ENCODE measurements at regions of chr1 and their contacts with region 1.

Region 1: DNA sequence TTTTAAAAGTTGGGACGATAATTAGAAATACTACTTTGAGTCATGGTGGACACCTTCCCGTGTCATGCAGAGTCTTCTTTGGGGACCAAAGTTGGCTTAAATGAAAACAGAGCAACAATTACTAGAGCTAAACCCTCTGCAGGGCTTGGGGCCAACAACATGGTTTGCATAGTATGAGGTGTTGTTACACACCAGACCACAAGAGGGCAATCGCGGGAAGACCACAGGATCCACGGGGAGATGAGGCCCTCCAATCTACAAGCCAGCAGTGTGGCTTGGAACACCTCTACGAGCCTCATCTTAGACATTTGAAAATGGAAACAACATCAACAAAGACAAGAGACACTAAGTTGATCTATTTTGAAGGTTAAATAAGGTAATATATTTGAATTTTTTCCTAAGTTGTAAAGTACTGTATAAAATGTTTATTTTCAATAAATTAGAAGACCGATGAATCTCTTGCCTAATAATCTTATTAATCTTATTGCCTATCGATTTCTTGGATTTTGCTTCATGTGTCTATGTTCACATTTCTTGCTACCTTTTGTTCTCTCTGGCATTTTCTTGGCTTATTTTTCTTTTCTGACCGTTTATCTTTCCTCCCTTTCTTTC is 8.2 kb upstream of the SMCP start:
- DNase-seq: peak; percentile 60
- ATAC-seq: peak; percentile 83
- H3K4me3 ChIP-seq: no peak overlapping the region
- H3K27ac ChIP-seq: no peak overlapping the region
- H3K4me1 ChIP-seq: no peaks in the 10 kb centered on the region
- H3K27me3 ChIP-seq: no peaks in the 10 kb centered on the region
- CTCF ChIP-seq: peak; percentile 79
- EP300 ChIP-seq: no peak
- POLR2A ChIP-seq: no peak
- RAD21 ChIP-seq: peak; percentile 13; the same call in 1 of the 2 replicates

Region 2: DNA sequence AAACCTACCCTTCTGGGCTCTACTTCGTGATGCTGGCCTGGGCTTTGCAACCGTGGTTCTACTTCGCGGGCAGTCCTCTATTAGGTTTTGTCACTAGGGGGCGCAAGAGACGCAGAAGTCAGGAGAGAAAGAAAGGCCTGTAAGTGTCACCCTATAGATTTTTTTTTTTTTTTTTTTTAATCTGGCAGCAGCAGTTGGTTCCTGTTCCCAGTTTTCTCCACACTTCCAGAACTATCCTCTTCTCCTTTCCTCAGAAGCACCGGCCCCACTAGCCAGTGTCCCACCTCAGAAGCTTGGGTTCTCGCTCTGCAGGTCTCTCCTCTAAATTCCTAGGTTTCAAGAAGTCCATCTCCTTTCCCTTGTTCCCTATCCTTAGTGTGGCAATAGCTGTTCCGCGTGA is 215.8 kb before region 1 on chr1:
- CTCF ChIA-PET with region 1: interaction called, 3 read pairs
- POLR2A ChIA-PET with region 1: no interaction called
- in situ Hi-C with region 1: no loop called
- intact Hi-C with region 1: loop called (anchors 5 kb)
- DNase-seq: peak; percentile 59
- ATAC-seq: peak; percentile 82
- H3K4me3 ChIP-seq: no peak overlapping the region
- H3K27ac ChIP-seq: no peak overlapping the region
- H3K4me1 ChIP-seq: no peaks in the 10 kb centered on the region
- H3K27me3 ChIP-seq: no peaks in the 10 kb centered on the region
- CTCF ChIP-seq: peak; percentile 72
- EP300 ChIP-seq: no peak
- POLR2A ChIP-seq: no peak
- RAD21 ChIP-seq: peak; percentile 11; the same call in 1 of the 2 replicates

Region 3: DNA sequence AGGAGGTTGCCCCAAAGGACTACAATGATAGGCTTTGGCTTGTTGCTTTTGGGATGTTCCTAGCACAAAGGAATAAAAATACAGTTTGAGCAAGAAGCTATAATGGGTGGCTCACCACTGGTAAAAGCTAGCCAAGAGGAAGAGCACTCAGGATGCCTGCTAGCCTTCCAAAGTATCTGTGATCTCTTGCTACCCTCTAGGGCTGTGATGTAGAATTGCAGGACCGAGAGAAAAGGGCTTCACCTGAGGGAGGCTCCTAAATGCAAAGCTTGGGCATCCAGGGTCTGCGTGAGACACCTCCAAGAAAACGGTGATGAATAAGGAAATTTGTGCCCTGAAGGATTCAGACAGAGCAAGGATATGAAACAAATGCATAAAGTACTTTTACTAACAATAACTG is 56.2 kb after region 1 on chr1:
- CTCF ChIA-PET with region 1: interaction called, 12 read pairs
- POLR2A ChIA-PET with region 1: no interaction called
- in situ Hi-C with region 1: loop called (anchors 5 kb)
- intact Hi-C with region 1: loop called (anchors 1 kb)
- DNase-seq: peak; percentile 18
- ATAC-seq: peak; percentile 75
- H3K4me3 ChIP-seq: no peak overlapping the region
- H3K27ac ChIP-seq: no peak overlapping the region
- H3K4me1 ChIP-seq: peaks cover 6% of the 10 kb centered on the region
- H3K27me3 ChIP-seq: no peaks in the 10 kb centered on the region
- CTCF ChIP-seq: peak; percentile 67
- EP300 ChIP-seq: no peak
- POLR2A ChIP-seq: no peak
- RAD21 ChIP-seq: 0 out of 2 replicates have a peak, but pooled peaks have one; percentile 28

Region 4: GRCh38 chr1:153150846-153151245 is 280.9 kb after region 1 on chr1 and contains the start of gene SPRR2G:
- CTCF ChIA-PET with region 1: no interaction called
- POLR2A ChIA-PET with region 1: no interaction called
- in situ Hi-C with region 1: no loop called
- intact Hi-C with region 1: no loop called
- DNase-seq: no peak
- ATAC-seq: no peak
- H3K4me3 ChIP-seq: no peak within 1 kb of the TSS
- H3K27ac ChIP-seq: no peak within 1 kb of the TSS
- H3K4me1 ChIP-seq: no peaks in the 10 kb centered on the region
- H3K27me3 ChIP-seq: no peaks in the 10 kb centered on the region
- CTCF ChIP-seq: no peak
- EP300 ChIP-seq: no peak
- POLR2A ChIP-seq: no peak
- RAD21 ChIP-seq: no peak
- total RNA-seq, gene SPRR2G: not detected in 2 replicates

Region 5: DNA sequence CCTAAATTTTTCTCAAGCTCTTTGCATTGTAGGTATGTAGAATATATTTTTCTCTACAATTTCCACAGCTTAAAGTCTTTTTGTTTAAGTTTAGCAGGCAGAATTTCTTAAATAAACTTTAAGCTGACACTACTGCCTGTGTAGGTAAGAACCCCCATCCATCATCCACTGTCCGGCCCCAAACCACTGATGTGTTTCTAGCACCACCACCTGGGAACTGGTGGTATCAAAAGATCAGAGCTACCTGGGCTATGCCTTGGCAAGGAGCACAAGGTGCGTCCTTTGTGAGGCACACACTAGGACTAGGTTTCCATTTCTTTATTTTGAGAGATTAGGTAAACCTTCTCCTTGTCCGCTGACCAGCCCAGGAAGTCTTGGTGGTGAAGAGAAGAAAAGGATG is 322.8 kb after region 1 on chr1:
- CTCF ChIA-PET with region 1: interaction called, 4 read pairs
- POLR2A ChIA-PET with region 1: no interaction called
- in situ Hi-C with region 1: loop called (anchors 10 kb)
- intact Hi-C with region 1: no loop called
- DNase-seq: peak; percentile 8
- ATAC-seq: peak; percentile 71
- H3K4me3 ChIP-seq: no peak overlapping the region
- H3K27ac ChIP-seq: no peak overlapping the region
- H3K4me1 ChIP-seq: no peaks in the 10 kb centered on the region
- H3K27me3 ChIP-seq: no peaks in the 10 kb centered on the region
- CTCF ChIP-seq: peak; percentile 58
- EP300 ChIP-seq: no peak
- POLR2A ChIP-seq: no peak
- RAD21 ChIP-seq: no peak

Region 6: GRCh38 chr1:153220606-153221303 is 350.8 kb after region 1 on chr1:
- CTCF ChIA-PET with region 1: interaction called, 7 read pairs
- POLR2A ChIA-PET with region 1: no interaction called
- in situ Hi-C with region 1: loop called (anchors 10 kb)
- intact Hi-C with region 1: no loop called
- DNase-seq: peak; percentile 8
- ATAC-seq: no peak
- H3K4me3 ChIP-seq: no peak overlapping the region
- H3K27ac ChIP-seq: no peak overlapping the region
- H3K4me1 ChIP-seq: no peaks in the 10 kb centered on the region
- H3K27me3 ChIP-seq: peaks cover 0 to 13% of the 10 kb centered on the region in 2 experiments; a peak in 3 of 5 replicates
- CTCF ChIP-seq: no peak
- EP300 ChIP-seq: no peak
- POLR2A ChIP-seq: no peak
- RAD21 ChIP-seq: no peak